IMR-90 (cell line): ENCODE measurements at regions of chr12 and their contacts with region 1.

Region 1: GRCh38 chr12:39541471-39541870 is 78.1 kb downstream of the ABCD2 start:
- DNase-seq: no peak
- ATAC-seq: no peak
- H3K4me3 ChIP-seq: no peak overlapping the region
- H3K27ac ChIP-seq: no peak overlapping the region
- H3K4me1 ChIP-seq: no peaks in the 10 kb centered on the region
- H3K27me3 ChIP-seq: no peaks in the 10 kb centered on the region
- CTCF ChIP-seq: no peak
- POLR2A ChIP-seq: no peak
- RAD21 ChIP-seq: no peak

Region 2: GRCh38 chr12:39605501-39605900 is 64.0 kb after region 1 on chr12:
- CTCF ChIA-PET with region 1: no interaction called
- POLR2A ChIA-PET with region 1: no interaction called
- dilution Hi-C with region 1: no loop called
- in situ Hi-C with region 1: loop called (anchors 10 kb)
- intact Hi-C with region 1: no loop called
- DNase-seq: no peak
- ATAC-seq: no peak
- H3K4me3 ChIP-seq: no peak overlapping the region
- H3K27ac ChIP-seq: no peak overlapping the region
- H3K4me1 ChIP-seq: no peaks in the 10 kb centered on the region
- H3K27me3 ChIP-seq: no peaks in the 10 kb centered on the region
- CTCF ChIP-seq: no peak
- POLR2A ChIP-seq: no peak
- RAD21 ChIP-seq: no peak